HEK293 (cell line): ENCODE measurements at regions of chr17 and their contacts with region 1.

Region 1: DNA sequence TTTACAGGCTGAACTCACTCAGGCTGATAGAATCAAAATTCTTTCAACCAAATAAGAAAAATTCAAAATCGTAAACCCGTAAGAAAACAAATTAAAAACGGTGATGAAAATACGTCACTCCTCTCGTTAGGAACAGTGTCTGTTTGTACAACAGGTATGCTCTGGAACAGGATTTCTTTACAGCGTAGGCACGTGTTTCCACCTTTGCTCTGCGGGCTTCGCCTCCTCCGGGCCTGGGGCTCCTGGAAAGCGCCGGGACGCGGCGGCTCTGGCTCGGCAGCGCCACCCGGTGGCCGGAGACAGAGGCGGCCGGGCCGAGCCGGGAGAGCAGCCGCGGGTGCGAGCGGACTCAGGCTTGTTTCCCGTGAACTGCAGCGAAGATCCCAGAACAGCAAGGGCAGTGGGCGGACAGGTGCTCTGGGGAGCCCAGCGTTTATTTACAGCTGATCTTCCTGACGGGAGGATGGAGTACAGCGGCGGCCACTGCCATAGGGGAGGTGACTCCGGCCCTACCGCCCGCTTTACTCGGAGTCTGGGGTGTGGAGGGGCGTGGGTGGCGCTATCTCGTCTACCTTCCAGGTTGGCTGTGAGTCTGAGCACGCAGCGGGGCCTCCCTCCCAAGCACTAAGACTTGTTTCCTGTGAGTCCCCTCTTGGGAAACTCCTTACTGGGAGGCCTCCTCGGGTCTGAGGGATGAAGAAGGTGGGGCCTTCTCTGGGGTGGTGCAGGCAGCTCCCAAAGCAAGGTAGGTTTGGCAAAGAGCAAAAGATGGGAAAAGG is 40.5 kb upstream of the ATP2A3 start:
- H3K4me3 ChIP-seq: no peak overlapping the region
- H3K27ac ChIP-seq: no peak overlapping the region
- H3K4me1 ChIP-seq: no peaks in the 10 kb centered on the region
- CTCF ChIP-seq: peak; percentile 88

Region 2: DNA sequence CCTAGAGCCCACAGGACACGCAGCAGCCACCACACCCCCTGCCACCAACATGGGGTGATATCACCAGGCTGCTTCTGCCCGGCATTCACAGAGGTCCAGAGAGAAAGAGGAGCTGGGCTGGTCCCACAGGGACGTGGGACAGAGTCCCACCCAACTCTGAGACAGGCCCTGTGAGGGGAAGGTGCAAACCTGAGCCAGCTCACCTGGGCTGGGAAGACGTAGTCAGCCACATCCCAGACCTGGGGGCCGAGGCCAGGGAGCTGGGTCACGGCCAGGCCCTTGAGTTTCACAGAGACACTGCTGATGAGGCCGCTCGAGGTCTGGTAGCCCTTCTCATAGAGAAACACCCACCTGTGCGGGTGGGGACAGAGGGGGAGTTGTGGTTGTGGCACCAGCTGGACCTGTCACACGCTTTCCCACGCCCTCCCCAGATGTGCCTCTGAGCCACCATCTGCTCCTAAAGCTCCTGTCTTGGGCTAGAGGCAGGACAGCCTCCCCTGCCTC is 99.6 kb before region 1 on chr17:
- CTCF ChIA-PET with region 1: no interaction called
- POLR2A ChIA-PET with region 1: no interaction called
- H3K4me3 ChIP-seq: no peak overlapping the region
- H3K27ac ChIP-seq: no peak overlapping the region
- H3K4me1 ChIP-seq: no peaks in the 10 kb centered on the region
- CTCF ChIP-seq: no peak

Region 3: DNA sequence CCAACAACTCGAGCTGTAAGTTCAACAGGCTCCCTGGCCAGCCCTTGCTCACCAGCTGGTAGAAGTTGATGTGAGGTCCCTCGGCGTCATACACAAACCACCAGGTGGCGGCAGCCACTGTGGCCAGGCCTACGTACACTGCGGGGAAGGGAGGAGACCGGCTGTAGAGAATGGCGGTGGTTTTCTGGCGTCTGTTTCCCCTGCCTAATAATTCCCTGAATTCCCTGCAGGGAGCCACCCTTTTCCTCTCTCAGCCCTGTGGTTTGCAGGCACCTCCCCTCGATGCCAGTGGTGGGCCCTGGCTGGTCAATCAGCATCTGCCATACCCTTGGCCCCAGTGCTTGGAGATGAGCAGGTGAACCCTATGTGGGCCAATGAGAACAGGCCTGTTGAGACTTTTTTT is 69.6 kb before region 1 on chr17:
- CTCF ChIA-PET with region 1: interaction called, 12 read pairs
- POLR2A ChIA-PET with region 1: no interaction called
- H3K4me3 ChIP-seq: no peak overlapping the region
- H3K27ac ChIP-seq: no peak overlapping the region
- H3K4me1 ChIP-seq: no peaks in the 10 kb centered on the region
- CTCF ChIP-seq: peak; percentile 83

Region 4: GRCh38 chr17:3993493-3994220 is 11.0 kb before region 1 on chr17:
- CTCF ChIA-PET with region 1: interaction called, 11 read pairs
- POLR2A ChIA-PET with region 1: no interaction called
- H3K4me3 ChIP-seq: no peak overlapping the region
- H3K27ac ChIP-seq: no peak overlapping the region
- H3K4me1 ChIP-seq: no peaks in the 10 kb centered on the region
- CTCF ChIP-seq: no peak

Region 5: GRCh38 chr17:4017377-4017776 is 12.7 kb after region 1 on chr17:
- CTCF ChIA-PET with region 1: interaction called, 10 read pairs
- POLR2A ChIA-PET with region 1: no interaction called
- H3K4me3 ChIP-seq: no peak overlapping the region
- H3K27ac ChIP-seq: no peak overlapping the region
- H3K4me1 ChIP-seq: no peaks in the 10 kb centered on the region
- CTCF ChIP-seq: no peak

Region 6: DNA sequence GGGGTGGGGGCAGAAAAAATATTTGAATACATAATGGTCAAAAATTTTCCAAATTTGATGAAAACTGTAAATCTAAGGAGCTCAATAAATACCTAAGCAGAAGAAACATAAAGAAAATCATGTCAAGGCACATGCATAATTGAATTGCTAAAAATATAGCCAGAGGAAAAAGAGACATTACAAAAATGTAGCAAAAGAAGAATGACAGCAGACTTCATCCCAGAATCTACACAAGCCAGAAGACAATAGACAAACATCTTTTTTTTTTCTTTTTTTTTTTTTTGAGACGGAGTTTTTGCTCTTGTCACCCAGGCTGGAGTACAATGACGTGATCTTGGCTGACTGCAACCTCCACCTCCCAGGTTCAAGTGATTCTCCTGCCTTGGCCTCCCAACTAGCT is 21.5 kb after region 1 on chr17:
- CTCF ChIA-PET with region 1: interaction called, 10 read pairs
- POLR2A ChIA-PET with region 1: no interaction called
- H3K4me3 ChIP-seq: no peak overlapping the region
- H3K27ac ChIP-seq: no peak overlapping the region
- H3K4me1 ChIP-seq: no peaks in the 10 kb centered on the region
- CTCF ChIP-seq: no peak